CD4-positive, alpha-beta memory T cell (primary cell): ENCODE measurements at regions of chr9 and their contacts with region 1.

Region 1: GRCh38 chr9:97921959-97922724 is at the start of gene TRMO:
- DNase-seq: peak; percentile 97 to 100 (median 98)
- H3K4me3 ChIP-seq: peak within 1 kb of the TSS; percentile 64 to 82
- H3K4me3 Mint-ChIP-seq: peak within 1 kb of the TSS; percentile 85 to 100 (median 94)
- H3K27ac ChIP-seq: peak within 1 kb of the TSS; percentile 90
- H3K27ac Mint-ChIP-seq: peak within 1 kb of the TSS; percentile 91 to 100 (median 100)
- H3K4me1 ChIP-seq: peaks cover 53% of the 10 kb centered on the region
- H3K4me1 Mint-ChIP-seq: peaks cover 26 to 54% (median 41%) of the 10 kb centered on the region in 4 donors
- H3K27me3 ChIP-seq: no peaks in the 10 kb centered on the region
- H3K27me3 Mint-ChIP-seq: peaks cover 0 to 1% of the 10 kb centered on the region in 2 donors
- total RNA-seq, gene TRMO: 51.6 to 59.5 TPM

Region 2: DNA sequence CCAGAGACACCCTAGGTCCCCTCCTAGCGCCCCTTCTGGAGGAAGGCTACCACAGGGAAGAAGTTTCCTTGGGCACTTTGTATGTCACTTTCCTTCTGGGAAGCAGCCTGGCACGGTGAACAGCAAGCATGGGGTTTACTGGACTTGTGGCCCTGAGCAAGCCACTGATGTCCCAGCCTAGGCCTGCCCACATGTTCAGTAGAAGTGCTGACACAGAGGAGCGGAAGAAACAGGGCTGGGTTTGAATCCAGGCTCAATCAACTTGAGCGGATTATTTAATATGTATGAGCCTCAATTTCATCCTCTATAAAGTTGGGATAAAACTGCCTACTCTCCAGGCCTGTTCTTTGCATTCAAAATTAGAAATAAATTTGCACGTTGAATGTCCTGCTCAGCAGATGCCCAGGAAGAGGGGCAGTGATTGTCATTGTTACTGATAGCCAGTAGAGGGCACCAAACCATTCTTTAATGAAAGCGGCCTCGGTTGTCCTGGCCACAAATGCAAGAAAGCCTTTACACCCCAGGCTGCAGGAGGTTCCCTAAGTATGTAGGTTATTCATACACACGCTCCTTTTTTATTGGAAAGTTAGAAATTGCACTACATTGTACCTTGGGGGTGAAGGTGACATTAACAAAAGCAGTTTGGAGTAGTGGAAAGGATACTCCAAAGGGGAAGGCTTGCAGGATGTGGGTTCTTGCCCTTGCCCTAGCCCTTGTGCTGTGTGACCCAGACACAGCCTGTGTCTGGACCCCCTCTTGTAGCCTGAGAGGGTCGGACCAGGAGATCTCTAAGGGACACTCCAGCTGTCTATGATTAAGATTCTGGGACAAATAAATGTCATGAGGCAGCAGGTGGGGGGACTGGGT is 211.6 kb before region 1 on chr9:
- CTCF ChIA-PET with region 1: interaction called, 3 read pairs
- POLR2A ChIA-PET with region 1: interaction called, 8 read pairs
- intact Hi-C with region 1: loop called (anchors 1 kb)
- DNase-seq: peak; percentile 55 to 65 (median 60)
- H3K4me3 ChIP-seq: no peak overlapping the region
- H3K4me3 Mint-ChIP-seq: peak overlapping the region in 6 of 8 donors; percentile 13 to 55 (median 42)
- H3K27ac ChIP-seq: no peak overlapping the region
- H3K27ac Mint-ChIP-seq: peak overlapping the region in 3 of 7 donors; percentile 30 to 57 (median 45)
- H3K4me1 ChIP-seq: peaks cover 34% of the 10 kb centered on the region
- H3K4me1 Mint-ChIP-seq: peaks cover 23 to 44% (median 30%) of the 10 kb centered on the region in 4 donors
- H3K27me3 ChIP-seq: peaks cover 10% of the 10 kb centered on the region
- H3K27me3 Mint-ChIP-seq: peaks cover 4 to 7% of the 10 kb centered on the region in 2 donors

Region 3: DNA sequence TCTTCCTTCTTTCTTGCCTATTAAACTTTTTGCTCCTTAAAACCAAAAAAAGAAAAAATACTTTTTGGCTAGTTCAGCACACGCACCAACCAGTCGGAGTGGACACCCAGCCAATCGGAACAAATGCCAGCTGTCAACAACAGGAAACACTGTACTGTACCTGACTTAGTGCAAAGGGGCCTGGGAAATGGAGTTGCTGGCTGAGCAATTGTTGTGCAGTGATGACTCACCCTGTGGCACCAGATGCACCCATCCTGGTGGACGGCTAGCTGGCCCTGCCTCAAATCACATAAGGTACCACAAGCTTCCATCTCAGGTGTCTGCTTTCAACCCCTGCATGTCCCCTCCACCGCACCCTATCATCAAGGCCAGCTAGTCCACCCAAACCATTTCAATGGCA is 48.3 kb before region 1 on chr9:
- CTCF ChIA-PET with region 1: no interaction called
- POLR2A ChIA-PET with region 1: no interaction called
- intact Hi-C with region 1: no loop called
- DNase-seq: no peak
- H3K4me3 ChIP-seq: no peak overlapping the region
- H3K4me3 Mint-ChIP-seq: no peak overlapping the region
- H3K27ac ChIP-seq: no peak overlapping the region
- H3K27ac Mint-ChIP-seq: no peak overlapping the region
- H3K4me1 ChIP-seq: no peaks in the 10 kb centered on the region
- H3K4me1 Mint-ChIP-seq: no peaks in the 10 kb centered on the region
- H3K27me3 ChIP-seq: no peaks in the 10 kb centered on the region
- H3K27me3 Mint-ChIP-seq: peaks cover 1 to 6% of the 10 kb centered on the region in 2 donors

Region 4: GRCh38 chr9:97906236-97906831 is 15.8 kb before region 1 on chr9:
- CTCF ChIA-PET with region 1: interaction called, 174 read pairs
- POLR2A ChIA-PET with region 1: interaction called, 746 read pairs
- intact Hi-C with region 1: loop called (anchors 1 kb)
- DNase-seq: peak; percentile 63 to 89 (median 70)
- H3K4me3 ChIP-seq: peak overlapping the region in 1 of 2 donors; percentile 45
- H3K4me3 Mint-ChIP-seq: peak overlapping the region; percentile 80 to 94 (median 86)
- H3K27ac ChIP-seq: peak overlapping the region; percentile 73
- H3K27ac Mint-ChIP-seq: peak overlapping the region; percentile 93 to 99 (median 98)
- H3K4me1 ChIP-seq: peaks cover 100% of the 10 kb centered on the region
- H3K4me1 Mint-ChIP-seq: peaks cover 57 to 94% (median 76%) of the 10 kb centered on the region in 4 donors
- H3K27me3 ChIP-seq: no peaks in the 10 kb centered on the region
- H3K27me3 Mint-ChIP-seq: no peaks in the 10 kb centered on the region

Region 5: GRCh38 chr9:97961361-97961760 is 39.2 kb after region 1 on chr9:
- CTCF ChIA-PET with region 1: interaction called, 256 read pairs
- POLR2A ChIA-PET with region 1: interaction called, 47 read pairs
- intact Hi-C with region 1: no loop called
- DNase-seq: no peak
- H3K4me3 ChIP-seq: no peak overlapping the region
- H3K4me3 Mint-ChIP-seq: no peak overlapping the region
- H3K27ac ChIP-seq: no peak overlapping the region
- H3K27ac Mint-ChIP-seq: no peak overlapping the region
- H3K4me1 ChIP-seq: no peaks in the 10 kb centered on the region
- H3K4me1 Mint-ChIP-seq: no peaks in the 10 kb centered on the region
- H3K27me3 ChIP-seq: no peaks in the 10 kb centered on the region
- H3K27me3 Mint-ChIP-seq: peaks cover 3% of the 10 kb centered on the region in 2 donors

Region 6: GRCh38 chr9:98045234-98046179 is 123.4 kb after region 1 on chr9:
- CTCF ChIA-PET with region 1: interaction called, 29 read pairs
- POLR2A ChIA-PET with region 1: interaction called, 9 read pairs
- intact Hi-C with region 1: no loop called
- DNase-seq: peak; percentile 60 to 80 (median 71)
- H3K4me3 ChIP-seq: peak overlapping the region; percentile 9 to 15
- H3K4me3 Mint-ChIP-seq: peak overlapping the region; percentile 65 to 88 (median 80)
- H3K27ac ChIP-seq: peak overlapping the region; percentile 9
- H3K27ac Mint-ChIP-seq: peak overlapping the region; percentile 29 to 97 (median 89)
- H3K4me1 ChIP-seq: peaks cover 22% of the 10 kb centered on the region
- H3K4me1 Mint-ChIP-seq: peaks cover 11 to 31% (median 15%) of the 10 kb centered on the region in 4 donors
- H3K27me3 ChIP-seq: no peaks in the 10 kb centered on the region
- H3K27me3 Mint-ChIP-seq: no peaks in the 10 kb centered on the region

Region 7: GRCh38 chr9:98118640-98119601 is 196.8 kb after region 1 on chr9 and contains the start of gene TRIM14:
- CTCF ChIA-PET with region 1: interaction called, 4 read pairs
- POLR2A ChIA-PET with region 1: interaction called, 15 read pairs
- intact Hi-C with region 1: loop called (anchors 2 kb)
- DNase-seq: peak; percentile 35 to 71 (median 45)
- H3K4me3 ChIP-seq: peak within 1 kb of the TSS; percentile 70 to 87
- H3K4me3 Mint-ChIP-seq: peak within 1 kb of the TSS; percentile 87 to 96 (median 92)
- H3K27ac ChIP-seq: peak within 1 kb of the TSS; percentile 92
- H3K27ac Mint-ChIP-seq: peak within 1 kb of the TSS; percentile 89 to 99 (median 95)
- H3K4me1 ChIP-seq: peaks cover 70% of the 10 kb centered on the region
- H3K4me1 Mint-ChIP-seq: peaks cover 37 to 65% (median 50%) of the 10 kb centered on the region in 4 donors
- H3K27me3 ChIP-seq: no peaks in the 10 kb centered on the region
- H3K27me3 Mint-ChIP-seq: no peaks in the 10 kb centered on the region
- total RNA-seq, gene TRIM14: 86.1 to 86.2 TPM